Ascending aorta (tissue), 2 donors: ENCODE measurements at regions of chr5 and their contacts with region 1.

Region 1: DNA sequence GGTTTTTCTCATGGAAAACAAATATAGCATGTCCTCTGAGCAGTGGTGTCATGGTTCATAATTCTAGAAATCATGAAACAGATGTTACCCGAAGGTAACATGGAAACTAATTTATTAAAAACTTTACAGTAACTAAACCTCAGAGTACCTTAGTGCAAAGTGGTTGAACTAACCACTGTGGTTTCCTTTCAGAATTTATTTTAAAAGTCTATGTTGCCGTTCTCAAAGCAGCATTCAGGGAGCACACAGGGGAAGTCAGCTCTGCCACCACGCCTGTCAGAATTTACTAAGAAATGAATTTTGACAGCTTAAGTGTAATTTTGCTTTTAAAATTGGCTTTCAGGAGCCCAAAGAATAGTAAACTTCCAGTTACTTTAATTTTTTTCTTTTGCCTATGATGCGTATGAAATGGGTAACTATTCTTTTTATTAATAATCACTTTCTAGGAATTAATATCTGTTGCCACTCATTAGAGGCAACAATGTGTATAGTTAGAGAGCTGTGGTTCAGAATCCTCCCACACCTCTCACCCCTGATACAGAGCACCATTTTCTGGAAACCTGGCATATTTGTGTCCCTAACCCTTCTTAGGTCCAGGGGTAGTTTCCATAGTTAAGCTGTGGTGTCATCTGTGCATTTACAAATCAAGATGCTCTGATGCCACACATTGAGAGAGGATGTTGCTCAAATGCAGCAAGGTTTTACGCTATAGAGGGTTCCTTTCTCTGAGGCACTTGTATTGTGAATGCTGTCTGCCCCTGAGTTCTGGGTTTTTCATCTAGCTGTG is 202.6 kb downstream of the ZSWIM6 start:
- DNase-seq: no peak
- H3K4me3 ChIP-seq: no peak overlapping the region
- H3K27ac ChIP-seq: no peak overlapping the region
- H3K4me1 ChIP-seq: no peaks in the 10 kb centered on the region
- H3K27me3 ChIP-seq: no peaks in the 10 kb centered on the region
- CTCF ChIP-seq: no peak

Region 2: GRCh38 chr5:61162010-61162831 is 372.5 kb before region 1 on chr5 and contains the start of gene SMIM15:
- intact Hi-C with region 1: loop called (anchors 10 kb)
- DNase-seq: peak; percentile 53 to 93
- H3K4me3 ChIP-seq: peak within 1 kb of the TSS; percentile 85 to 86
- H3K27ac ChIP-seq: peak within 1 kb of the TSS; percentile 85 to 91
- H3K4me1 ChIP-seq: peaks cover 0 to 6% of the 10 kb centered on the region in 2 donors
- H3K27me3 ChIP-seq: no peaks in the 10 kb centered on the region
- CTCF ChIP-seq: no peak
- total RNA-seq, gene SMIM15: 22.4 TPM